PC-9 (cell line): ENCODE measurements at regions of chr4 and their contacts with region 1.

Region 1: GRCh38 chr4:84706286-84706685 is 123.4 kb downstream of the CDS1 start:
- DNase-seq: no peak
- H3K4me3 ChIP-seq: no peak overlapping the region
- H3K27ac ChIP-seq: no peak overlapping the region
- H3K4me1 ChIP-seq: no peaks in the 10 kb centered on the region
- H3K27me3 ChIP-seq: no peaks in the 10 kb centered on the region
- CTCF ChIP-seq: no peak

Region 2: DNA sequence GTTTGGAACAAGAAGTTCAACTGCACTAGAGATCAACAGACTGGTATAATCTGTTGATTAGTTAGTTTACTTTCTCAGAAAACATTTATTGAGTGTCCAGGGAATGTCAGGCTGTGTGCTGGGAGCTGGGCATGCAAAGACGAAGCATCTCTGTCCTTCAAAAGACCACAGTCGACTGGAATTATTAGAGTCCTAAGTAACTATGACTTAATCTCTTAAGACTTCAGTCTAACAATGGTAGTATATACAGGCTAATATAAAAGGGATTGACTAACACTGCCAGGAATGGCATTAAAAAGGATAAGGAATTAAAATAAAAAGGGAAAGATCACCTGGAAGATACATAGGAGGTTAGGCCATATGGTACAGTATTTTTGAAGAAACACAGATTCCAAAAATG is 131.5 kb after region 1 on chr4:
- CTCF ChIA-PET with region 1: no interaction called
- POLR2A ChIA-PET with region 1: no interaction called
- intact Hi-C with region 1: no loop called
- DNase-seq: no peak
- H3K4me3 ChIP-seq: no peak overlapping the region
- H3K27ac ChIP-seq: no peak overlapping the region
- H3K4me1 ChIP-seq: no peaks in the 10 kb centered on the region
- H3K27me3 ChIP-seq: no peaks in the 10 kb centered on the region
- CTCF ChIP-seq: no peak

Region 3: DNA sequence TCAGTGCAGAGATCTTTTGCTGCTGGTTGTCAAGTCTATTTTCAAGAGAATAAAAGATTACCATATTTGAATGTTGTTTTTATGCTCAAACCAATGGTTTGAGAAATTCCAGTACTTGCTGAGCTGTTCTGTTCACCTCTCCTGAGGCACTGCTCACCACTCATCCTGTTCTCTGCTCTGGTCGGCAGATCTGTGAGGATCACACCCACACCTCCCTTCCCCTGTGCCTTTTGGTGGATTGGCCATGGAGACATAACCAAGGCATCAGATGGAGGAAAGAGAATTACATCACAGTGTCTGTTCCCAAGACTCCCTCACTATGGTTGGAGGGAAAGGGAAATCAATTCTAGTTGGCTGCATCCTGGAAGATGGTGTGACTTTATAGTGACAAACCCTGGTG is 1160.2 kb after region 1 on chr4:
- CTCF ChIA-PET with region 1: no interaction called
- POLR2A ChIA-PET with region 1: interaction called, 10 read pairs
- intact Hi-C with region 1: no loop called
- DNase-seq: no peak
- H3K4me3 ChIP-seq: no peak overlapping the region
- H3K27ac ChIP-seq: no peak overlapping the region
- H3K4me1 ChIP-seq: no peaks in the 10 kb centered on the region
- H3K27me3 ChIP-seq: no peaks in the 10 kb centered on the region
- CTCF ChIP-seq: no peak